Mammary epithelial cell (primary cell): ENCODE measurements at regions of chr9 and their contacts with region 1.

Region 1: DNA sequence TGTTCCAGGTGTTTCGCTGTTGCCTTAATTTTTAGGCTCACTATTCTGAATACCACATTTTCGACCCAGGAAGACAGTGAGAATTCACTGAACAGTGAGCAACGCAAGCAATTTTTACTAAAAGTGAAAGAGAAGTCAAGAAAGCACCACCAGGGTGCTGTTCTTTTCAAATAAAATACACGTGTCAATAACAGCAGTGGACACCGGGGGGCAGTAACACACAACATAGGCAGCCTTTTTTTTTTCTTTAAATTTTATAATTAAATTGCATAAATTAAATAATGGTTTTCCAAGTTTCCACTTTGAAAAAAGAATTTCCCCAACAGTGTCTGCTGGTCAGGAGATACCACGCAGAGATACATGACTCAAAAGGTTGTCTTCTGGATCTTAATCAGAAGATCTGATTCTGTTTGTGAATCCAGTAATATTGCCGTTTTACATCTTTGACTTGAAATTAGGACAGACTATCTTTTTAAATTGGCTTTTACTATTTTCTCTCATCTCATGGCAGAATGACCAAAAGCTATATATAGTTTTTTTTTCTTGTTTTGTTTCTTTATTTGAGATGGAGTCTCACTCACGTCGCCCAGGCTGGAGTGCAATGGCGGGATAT is 47.1 kb upstream of the SH3GL2 start:
- DNase-seq: peak; percentile 29
- H3K4me3 ChIP-seq: no peak overlapping the region
- H3K27ac ChIP-seq: no peak overlapping the region
- H3K4me1 ChIP-seq: no peaks in the 10 kb centered on the region
- H3K27me3 ChIP-seq: no peaks in the 10 kb centered on the region
- CTCF ChIP-seq: peak; percentile 47 to 68

Region 2: DNA sequence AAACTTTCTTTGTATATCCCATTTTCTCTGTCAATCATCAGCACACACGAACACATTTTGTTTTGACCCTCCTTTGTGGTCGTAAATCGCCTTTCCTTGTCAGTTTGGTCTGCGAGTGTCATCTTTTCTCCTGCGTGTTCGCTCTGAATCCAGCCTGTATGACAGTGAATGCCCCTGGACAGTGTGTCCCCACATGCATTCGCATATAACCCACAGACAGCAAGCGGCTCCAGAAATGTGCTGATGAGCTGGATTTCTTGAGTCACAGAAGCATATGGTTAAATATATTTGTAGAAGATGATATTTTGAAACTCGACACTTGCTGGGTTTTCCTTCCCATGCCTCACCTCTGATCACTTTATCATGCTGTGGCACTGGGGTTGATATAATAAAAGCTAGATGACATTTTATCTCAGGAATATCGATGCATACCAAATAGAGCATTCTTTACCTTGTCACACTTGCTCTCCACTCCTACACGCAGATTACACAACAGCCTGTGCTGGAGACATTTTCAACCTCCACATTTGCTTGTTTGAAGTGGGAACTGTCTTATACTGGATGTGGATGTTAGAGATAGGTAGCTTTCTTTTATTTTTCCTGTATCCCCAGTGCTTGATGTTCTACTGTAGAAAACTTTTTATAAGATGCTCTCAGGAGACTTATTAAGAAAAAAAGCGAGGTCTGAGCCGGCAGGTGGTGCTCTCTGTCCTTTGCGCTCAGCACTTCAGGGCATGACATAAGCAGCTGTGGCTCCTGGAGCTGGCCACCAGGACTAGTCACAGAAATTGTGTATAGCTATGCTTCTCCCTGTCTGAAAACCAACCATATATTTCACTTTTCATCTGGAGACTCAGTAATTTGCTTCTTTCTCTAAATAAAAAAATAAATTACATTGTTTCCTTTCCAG is 262.2 kb after region 1 on chr9:
- CTCF ChIA-PET with region 1: interaction called, 3 read pairs
- dilution Hi-C with region 1: no loop called
- in situ Hi-C with region 1: no loop called
- intact Hi-C with region 1: loop called (anchors 2 kb)
- DNase-seq: peak; percentile 36
- H3K4me3 ChIP-seq: no peak overlapping the region
- H3K27ac ChIP-seq: no peak overlapping the region
- H3K4me1 ChIP-seq: no peaks in the 10 kb centered on the region
- H3K27me3 ChIP-seq: no peaks in the 10 kb centered on the region
- CTCF ChIP-seq: peak; percentile 24 to 50

Region 3: GRCh38 chr9:17802249-17802857 is 270.6 kb after region 1 on chr9:
- CTCF ChIA-PET with region 1: no interaction called
- dilution Hi-C with region 1: no loop called
- in situ Hi-C with region 1: loop called (anchors 10 to 25 kb)
- intact Hi-C with region 1: loop called (anchors 2 kb)
- DNase-seq: no peak
- H3K4me3 ChIP-seq: no peak overlapping the region
- H3K27ac ChIP-seq: no peak overlapping the region
- H3K4me1 ChIP-seq: no peaks in the 10 kb centered on the region
- H3K27me3 ChIP-seq: no peaks in the 10 kb centered on the region
- CTCF ChIP-seq: peak; percentile 47 to 56

Region 4: GRCh38 chr9:17810728-17811571 is 279.2 kb after region 1 on chr9:
- CTCF ChIA-PET with region 1: interaction called, 3 read pairs
- dilution Hi-C with region 1: no loop called
- in situ Hi-C with region 1: loop called (anchors 10 to 25 kb)
- intact Hi-C with region 1: no loop called
- DNase-seq: peak; percentile 28
- H3K4me3 ChIP-seq: no peak overlapping the region
- H3K27ac ChIP-seq: no peak overlapping the region
- H3K4me1 ChIP-seq: no peaks in the 10 kb centered on the region
- H3K27me3 ChIP-seq: peaks cover 1% of the 10 kb centered on the region
- CTCF ChIP-seq: peak; percentile 72 to 85

Region 5: DNA sequence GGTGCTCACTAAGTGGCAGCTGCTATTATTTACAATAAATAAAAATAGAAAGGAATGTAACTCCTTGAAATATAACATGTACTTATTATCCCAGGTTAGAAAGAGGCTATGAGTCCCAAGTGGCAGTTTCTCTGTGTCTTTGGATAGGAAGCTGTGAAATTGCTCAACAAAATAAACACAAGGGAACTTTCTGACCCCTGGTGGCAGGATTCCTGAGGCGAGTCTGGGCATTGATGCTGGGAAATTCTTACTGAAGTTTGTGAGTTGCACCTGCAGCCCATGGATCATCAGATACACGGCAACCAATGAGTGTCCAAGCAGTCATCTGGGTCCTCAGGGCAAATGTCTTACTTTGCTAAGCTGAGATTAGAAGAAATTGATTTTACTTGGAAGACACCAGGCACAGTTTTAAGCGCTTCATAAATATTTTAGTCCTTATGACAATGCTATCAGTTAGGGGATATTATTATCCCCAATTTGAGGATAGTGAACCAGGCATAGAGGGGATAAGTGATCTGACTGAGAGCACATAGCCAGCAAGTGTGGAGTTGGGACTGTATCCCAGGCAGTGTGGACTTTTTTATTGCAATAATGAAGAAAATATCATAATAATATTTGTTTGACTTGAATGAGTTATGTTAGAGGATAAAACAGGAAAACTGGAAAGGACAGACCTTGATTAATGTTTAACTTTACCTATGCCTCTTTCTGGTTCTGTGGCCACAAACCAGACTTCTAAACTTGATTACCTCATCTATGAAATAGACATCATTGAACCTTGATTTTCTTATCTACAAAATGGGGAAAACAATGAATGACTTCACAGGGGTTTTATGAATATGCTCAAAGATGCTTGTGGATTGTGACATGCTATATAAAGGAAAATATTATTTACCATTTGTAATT is 676.7 kb after region 1 on chr9:
- CTCF ChIA-PET with region 1: no interaction called
- dilution Hi-C with region 1: no loop called
- in situ Hi-C with region 1: loop called in 1 of 2 experiments (anchors 10 kb)
- intact Hi-C with region 1: loop called (anchors 1 kb)
- DNase-seq: peak; percentile 65
- H3K4me3 ChIP-seq: no peak overlapping the region
- H3K27ac ChIP-seq: no peak overlapping the region
- H3K4me1 ChIP-seq: peaks cover 5% of the 10 kb centered on the region
- H3K27me3 ChIP-seq: no peaks in the 10 kb centered on the region
- CTCF ChIP-seq: peak; percentile 72 to 79

Region 6: GRCh38 chr9:19028835-19029451 is 1497.2 kb after region 1 on chr9:
- CTCF ChIA-PET with region 1: no interaction called
- dilution Hi-C with region 1: no loop called
- in situ Hi-C with region 1: loop called in 1 of 2 experiments (anchors 10 kb)
- intact Hi-C with region 1: loop called (anchors 5 kb)
- DNase-seq: peak; percentile 40
- H3K4me3 ChIP-seq: no peak overlapping the region
- H3K27ac ChIP-seq: no peak overlapping the region
- H3K4me1 ChIP-seq: no peaks in the 10 kb centered on the region
- H3K27me3 ChIP-seq: no peaks in the 10 kb centered on the region
- CTCF ChIP-seq: peak; percentile 58 to 72